Naive thymus-derived CD4-positive, alpha-beta T cell (primary cell): ENCODE measurements at regions of chr5 and their contacts with region 1.

Region 1: GRCh38 chr5:55534436-55535198 is at the start of gene PLPP1:
- DNase-seq: peak; percentile 74 to 91 (median 86)
- ATAC-seq: peak; percentile 91
- H3K4me3 ChIP-seq: peak within 1 kb of the TSS; percentile 83
- H3K4me3 Mint-ChIP-seq: peak within 1 kb of the TSS; percentile 86 to 97 (median 94)
- H3K27ac ChIP-seq: peak within 1 kb of the TSS; percentile 91
- H3K27ac Mint-ChIP-seq: peak within 1 kb of the TSS; percentile 79 to 96 (median 91)
- H3K4me1 ChIP-seq: peaks cover 6 to 26% of the 10 kb centered on the region in 2 donors
- H3K4me1 Mint-ChIP-seq: peaks cover 20 to 61% (median 50%) of the 10 kb centered on the region in 7 donors
- H3K27me3 ChIP-seq: no peaks in the 10 kb centered on the region
- H3K27me3 Mint-ChIP-seq: no peaks in the 10 kb centered on the region
- total RNA-seq, gene PLPP1: 8.0 to 31.3 (median 8.4) TPM

Region 2: GRCh38 chr5:55418994-55419968 is 115.3 kb before region 1 on chr5:
- CTCF ChIA-PET with region 1: no interaction called
- POLR2A ChIA-PET with region 1: no interaction called
- intact Hi-C with region 1: loop called in 1 of 2 experiments (anchors 10 kb)
- DNase-seq: no peak
- ATAC-seq: no peak
- H3K4me3 ChIP-seq: no peak overlapping the region
- H3K4me3 Mint-ChIP-seq: no peak overlapping the region
- H3K27ac ChIP-seq: no peak overlapping the region
- H3K27ac Mint-ChIP-seq: peak overlapping the region in 4 of 9 donors; percentile 4 to 67 (median 52)
- H3K4me1 ChIP-seq: no peaks in the 10 kb centered on the region
- H3K4me1 Mint-ChIP-seq: peaks cover 0 to 18% (median 4%) of the 10 kb centered on the region in 7 donors
- H3K27me3 ChIP-seq: no peaks in the 10 kb centered on the region
- H3K27me3 Mint-ChIP-seq: no peaks in the 10 kb centered on the region

Region 3: DNA sequence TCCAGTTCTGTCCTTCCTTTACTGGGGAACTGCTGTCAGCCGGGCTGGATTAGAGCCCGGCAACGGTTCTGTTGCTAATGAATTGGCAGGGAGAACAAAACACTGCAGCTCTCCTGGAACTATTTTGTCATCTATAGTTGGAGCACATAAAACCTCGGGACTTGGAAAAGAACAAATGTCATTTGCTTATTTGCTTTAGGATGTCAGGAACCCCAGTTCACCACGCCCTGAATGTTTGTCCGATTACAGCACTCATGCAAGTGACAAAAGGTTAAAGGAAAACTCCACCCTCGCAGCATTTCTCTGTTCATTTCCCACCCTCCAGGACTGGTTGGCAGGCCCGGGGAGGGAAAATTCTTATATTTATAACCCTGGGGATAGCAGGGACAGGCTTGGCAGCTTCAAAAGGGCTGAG is 66.6 kb after region 1 on chr5:
- CTCF ChIA-PET with region 1: no interaction called
- POLR2A ChIA-PET with region 1: no interaction called
- intact Hi-C with region 1: loop called (anchors 2 kb)
- DNase-seq: no peak
- ATAC-seq: no peak
- H3K4me3 ChIP-seq: peak overlapping the region; percentile 27
- H3K4me3 Mint-ChIP-seq: peak overlapping the region; percentile 59 to 86 (median 76)
- H3K27ac ChIP-seq: peak overlapping the region; percentile 44
- H3K27ac Mint-ChIP-seq: peak overlapping the region; percentile 58 to 78 (median 70)
- H3K4me1 ChIP-seq: peaks cover 0 to 21% of the 10 kb centered on the region in 2 donors
- H3K4me1 Mint-ChIP-seq: peaks cover 8 to 49% (median 29%) of the 10 kb centered on the region in 7 donors
- H3K27me3 ChIP-seq: no peaks in the 10 kb centered on the region
- H3K27me3 Mint-ChIP-seq: no peaks in the 10 kb centered on the region

Region 4: DNA sequence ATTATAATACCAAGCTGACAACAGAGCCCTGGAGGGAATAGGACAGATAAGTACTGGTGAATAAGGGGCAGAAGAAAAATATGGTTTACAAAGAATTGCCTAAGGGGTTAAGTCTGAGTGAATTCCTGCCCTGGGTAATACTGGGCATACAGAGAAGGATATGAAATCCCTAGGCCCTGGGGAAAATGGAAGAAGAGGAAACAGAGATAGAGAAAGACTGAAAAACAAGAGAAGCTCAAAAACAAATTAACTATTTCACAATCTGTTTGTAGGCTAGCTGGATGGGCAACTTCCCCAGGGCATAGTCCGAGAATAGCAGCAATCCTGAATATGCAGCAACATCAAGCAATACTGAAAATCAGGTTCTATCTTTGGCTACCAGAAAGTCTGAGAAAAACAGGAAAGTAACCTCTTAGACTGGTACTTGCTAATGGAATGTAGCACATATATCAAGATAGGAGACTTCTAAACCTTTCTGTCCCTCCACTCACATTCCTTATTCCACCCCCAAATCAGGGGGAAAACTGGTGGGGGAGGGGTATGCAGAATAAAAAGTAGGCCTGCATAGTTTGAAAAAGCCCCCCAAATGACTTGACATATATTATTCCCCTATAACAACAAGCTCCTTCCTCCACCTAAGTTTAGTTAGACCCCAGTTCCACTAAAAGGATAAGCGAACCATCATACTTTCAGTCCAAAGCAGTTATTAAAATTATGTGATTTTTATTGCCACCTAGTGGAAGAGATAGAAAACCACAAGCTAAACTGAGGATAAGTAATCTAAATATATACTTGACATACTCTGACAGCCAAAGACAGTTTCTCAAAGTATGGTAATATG is 156.9 kb after region 1 on chr5:
- CTCF ChIA-PET with region 1: no interaction called
- POLR2A ChIA-PET with region 1: interaction called, 3 read pairs
- intact Hi-C with region 1: loop called (anchors 2 kb)
- DNase-seq: peak in 6 of 9 donors; percentile 35 to 59 (median 48)
- ATAC-seq: peak; percentile 65
- H3K4me3 ChIP-seq: no peak overlapping the region
- H3K4me3 Mint-ChIP-seq: no peak overlapping the region
- H3K27ac ChIP-seq: no peak overlapping the region
- H3K27ac Mint-ChIP-seq: no peak overlapping the region
- H3K4me1 ChIP-seq: peaks cover 0 to 3% of the 10 kb centered on the region in 2 donors
- H3K4me1 Mint-ChIP-seq: peaks cover 0 to 22% (median 6%) of the 10 kb centered on the region in 7 donors
- H3K27me3 ChIP-seq: no peaks in the 10 kb centered on the region
- H3K27me3 Mint-ChIP-seq: no peaks in the 10 kb centered on the region